CD4-positive, alpha-beta memory T cell (primary cell): ENCODE measurements at regions of chr5 and their contacts with region 1.

Region 1: GRCh38 chr5:76601470-76601869 is 21.7 kb downstream of the F2RL2 start:
- DNase-seq: peak in 4 of 5 donors; percentile 42 to 58 (median 46)
- H3K4me3 ChIP-seq: no peak overlapping the region
- H3K4me3 Mint-ChIP-seq: no peak overlapping the region
- H3K27ac ChIP-seq: no peak overlapping the region
- H3K27ac Mint-ChIP-seq: peak overlapping the region in 5 of 7 donors; percentile 23 to 59 (median 31)
- H3K4me1 ChIP-seq: no peaks in the 10 kb centered on the region
- H3K4me1 Mint-ChIP-seq: peaks cover 0 to 17% (median 5%) of the 10 kb centered on the region in 4 donors
- H3K27me3 ChIP-seq: no peaks in the 10 kb centered on the region
- H3K27me3 Mint-ChIP-seq: no peaks in the 10 kb centered on the region

Region 2: DNA sequence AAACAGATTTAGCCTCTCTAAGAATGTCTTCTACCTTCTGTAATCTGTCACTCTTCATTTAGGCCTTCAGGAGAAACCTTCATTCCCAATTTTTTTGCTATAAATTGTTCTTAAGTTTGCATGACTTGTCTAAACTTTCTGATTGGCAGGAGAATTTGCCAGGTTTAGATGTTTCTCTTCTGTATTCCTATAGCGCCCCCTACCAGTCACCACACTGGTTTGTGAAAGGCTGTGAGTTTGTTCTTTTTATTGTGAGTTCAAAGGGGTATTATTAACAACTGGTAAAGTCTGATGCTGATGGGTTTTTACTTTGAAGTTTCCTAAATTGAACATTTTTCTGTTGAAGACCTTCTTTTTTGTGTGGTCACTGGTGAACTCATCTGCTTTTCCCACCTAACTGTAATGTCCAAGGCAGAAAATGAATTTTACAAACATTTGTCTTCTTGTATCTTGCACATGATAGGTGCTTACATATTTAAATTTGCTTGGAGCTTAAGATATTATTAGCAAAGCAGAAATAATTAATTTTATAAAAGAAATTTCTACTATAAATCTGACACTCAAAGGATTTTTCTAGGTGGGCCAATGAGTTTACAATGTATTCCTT is 40.1 kb after region 1 on chr5:
- CTCF ChIA-PET with region 1: interaction called, 7 read pairs
- POLR2A ChIA-PET with region 1: no interaction called
- intact Hi-C with region 1: loop called (anchors 1 kb)
- DNase-seq: peak; percentile 47 to 60 (median 56)
- H3K4me3 ChIP-seq: no peak overlapping the region
- H3K4me3 Mint-ChIP-seq: no peak overlapping the region
- H3K27ac ChIP-seq: no peak overlapping the region
- H3K27ac Mint-ChIP-seq: peak overlapping the region in 3 of 7 donors; percentile 9 to 61 (median 34)
- H3K4me1 ChIP-seq: no peaks in the 10 kb centered on the region
- H3K4me1 Mint-ChIP-seq: peaks cover 0 to 3% (median 1%) of the 10 kb centered on the region in 4 donors
- H3K27me3 ChIP-seq: no peaks in the 10 kb centered on the region
- H3K27me3 Mint-ChIP-seq: no peaks in the 10 kb centered on the region

Region 3: GRCh38 chr5:76715736-76716455 is 114.4 kb after region 1 on chr5 and contains the start of gene F2R:
- CTCF ChIA-PET with region 1: interaction called, 3 read pairs
- POLR2A ChIA-PET with region 1: no interaction called
- intact Hi-C with region 1: loop called (anchors 1 kb)
- DNase-seq: peak; percentile 51 to 58 (median 57)
- H3K4me3 ChIP-seq: peak within 1 kb of the TSS in 1 of 2 donors; percentile 75
- H3K4me3 Mint-ChIP-seq: peak within 1 kb of the TSS; percentile 67 to 90 (median 86)
- H3K27ac ChIP-seq: peak within 1 kb of the TSS; percentile 51
- H3K27ac Mint-ChIP-seq: peak within 1 kb of the TSS; percentile 22 to 80 (median 66)
- H3K4me1 ChIP-seq: peaks cover 26% of the 10 kb centered on the region
- H3K4me1 Mint-ChIP-seq: peaks cover 13 to 43% (median 24%) of the 10 kb centered on the region in 4 donors
- H3K27me3 ChIP-seq: no peaks in the 10 kb centered on the region
- H3K27me3 Mint-ChIP-seq: peaks cover 0 to 7% of the 10 kb centered on the region in 2 donors
- total RNA-seq, gene F2R: 12.4 to 14.6 TPM

Region 4: GRCh38 chr5:77015938-77016569 is 414.6 kb after region 1 on chr5:
- CTCF ChIA-PET with region 1: no interaction called
- POLR2A ChIA-PET with region 1: no interaction called
- intact Hi-C with region 1: loop called (anchors 10 kb)
- DNase-seq: no peak
- H3K4me3 ChIP-seq: no peak overlapping the region
- H3K4me3 Mint-ChIP-seq: no peak overlapping the region
- H3K27ac ChIP-seq: no peak overlapping the region
- H3K27ac Mint-ChIP-seq: no peak overlapping the region
- H3K4me1 ChIP-seq: no peaks in the 10 kb centered on the region
- H3K4me1 Mint-ChIP-seq: peaks cover 0 to 1% (median 0%) of the 10 kb centered on the region in 4 donors
- H3K27me3 ChIP-seq: no peaks in the 10 kb centered on the region
- H3K27me3 Mint-ChIP-seq: peaks cover 8% of the 10 kb centered on the region in 2 donors

Region 5: DNA sequence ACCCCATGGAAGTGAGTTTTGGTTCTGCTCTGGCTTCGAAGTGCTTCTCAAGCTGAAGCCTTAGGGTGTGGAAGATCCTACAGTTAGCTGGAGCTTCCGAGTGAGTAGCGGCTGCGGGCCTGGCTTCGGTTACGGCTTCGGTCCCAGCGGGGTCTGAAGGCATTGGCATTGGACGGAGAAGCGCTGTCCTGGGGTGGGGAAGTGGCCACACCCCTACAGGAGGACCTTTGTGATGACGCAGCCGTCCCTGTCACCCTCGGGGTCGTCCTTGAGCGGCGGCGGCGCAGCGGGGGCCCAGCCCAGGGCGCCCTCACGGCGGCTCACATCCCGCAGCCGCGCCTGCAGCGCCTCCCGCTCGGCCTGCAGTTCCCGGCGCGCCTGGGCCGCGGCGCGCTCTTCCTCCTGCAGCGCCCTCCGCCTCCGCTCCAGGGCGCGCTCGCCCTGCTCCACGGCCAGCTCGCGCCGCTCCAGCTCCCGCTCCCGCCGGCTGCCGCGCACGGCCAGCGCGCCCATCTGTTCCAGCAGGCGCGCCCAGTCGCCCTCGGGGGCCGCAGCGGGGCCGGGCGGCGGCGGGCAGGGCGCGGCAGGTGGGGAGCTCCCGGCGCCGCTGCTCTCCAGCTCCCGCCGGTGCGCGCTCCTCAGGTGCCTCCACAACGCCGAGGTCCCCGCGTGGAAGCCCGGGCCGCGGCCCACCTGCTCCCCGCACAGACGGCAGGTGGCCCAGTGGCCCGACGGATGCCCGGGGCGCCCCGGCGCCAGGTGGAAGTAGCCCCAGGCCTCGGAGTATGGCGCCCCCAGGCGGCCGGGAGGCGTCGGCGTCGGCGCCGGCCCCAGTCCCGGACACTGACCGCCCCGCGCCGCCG is 475.7 kb after region 1 on chr5:
- CTCF ChIA-PET with region 1: no interaction called
- POLR2A ChIA-PET with region 1: no interaction called
- intact Hi-C with region 1: loop called (anchors 2 kb)
- DNase-seq: peak; percentile 25 to 44 (median 35)
- H3K4me3 ChIP-seq: no peak overlapping the region
- H3K4me3 Mint-ChIP-seq: peak overlapping the region; percentile 39 to 78 (median 60)
- H3K27ac ChIP-seq: no peak overlapping the region
- H3K27ac Mint-ChIP-seq: peak overlapping the region in 1 of 7 donors; percentile 26
- H3K4me1 ChIP-seq: peaks cover 5% of the 10 kb centered on the region
- H3K4me1 Mint-ChIP-seq: peaks cover 6 to 9% (median 8%) of the 10 kb centered on the region in 4 donors
- H3K27me3 ChIP-seq: no peaks in the 10 kb centered on the region
- H3K27me3 Mint-ChIP-seq: no peaks in the 10 kb centered on the region